Left colon (tissue), 2 donors: ENCODE measurements at regions of chr12 and their contacts with region 1.

Region 1: DNA sequence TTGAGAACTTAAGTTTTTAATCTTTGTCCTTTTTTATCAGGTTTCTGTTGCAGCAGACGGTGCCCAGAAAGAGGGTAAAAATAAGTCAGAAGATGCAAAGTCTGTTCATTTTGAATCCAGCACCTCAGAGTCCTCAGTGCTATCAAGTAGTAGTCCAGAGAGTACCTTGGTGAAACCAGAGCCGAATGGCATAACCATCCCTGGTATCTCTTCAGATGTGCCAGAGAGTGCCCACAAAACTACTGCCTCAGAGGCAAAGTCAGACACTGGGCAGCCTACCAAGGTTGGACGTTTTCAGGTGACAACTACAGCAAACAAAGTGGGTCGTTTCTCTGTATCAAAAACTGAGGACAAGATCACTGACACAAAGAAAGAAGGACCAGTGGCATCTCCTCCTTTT is 53.5 kb downstream of the RAD52 start:
- DNase-seq: no peak
- ATAC-seq: no peak

Region 2: GRCh38 chr12:563250-563781 is 332.7 kb before region 1 on chr12:
- intact Hi-C with region 1: loop called in 1 of 2 experiments (anchors 5 kb)
- DNase-seq: no peak
- ATAC-seq: no peak

Region 3: DNA sequence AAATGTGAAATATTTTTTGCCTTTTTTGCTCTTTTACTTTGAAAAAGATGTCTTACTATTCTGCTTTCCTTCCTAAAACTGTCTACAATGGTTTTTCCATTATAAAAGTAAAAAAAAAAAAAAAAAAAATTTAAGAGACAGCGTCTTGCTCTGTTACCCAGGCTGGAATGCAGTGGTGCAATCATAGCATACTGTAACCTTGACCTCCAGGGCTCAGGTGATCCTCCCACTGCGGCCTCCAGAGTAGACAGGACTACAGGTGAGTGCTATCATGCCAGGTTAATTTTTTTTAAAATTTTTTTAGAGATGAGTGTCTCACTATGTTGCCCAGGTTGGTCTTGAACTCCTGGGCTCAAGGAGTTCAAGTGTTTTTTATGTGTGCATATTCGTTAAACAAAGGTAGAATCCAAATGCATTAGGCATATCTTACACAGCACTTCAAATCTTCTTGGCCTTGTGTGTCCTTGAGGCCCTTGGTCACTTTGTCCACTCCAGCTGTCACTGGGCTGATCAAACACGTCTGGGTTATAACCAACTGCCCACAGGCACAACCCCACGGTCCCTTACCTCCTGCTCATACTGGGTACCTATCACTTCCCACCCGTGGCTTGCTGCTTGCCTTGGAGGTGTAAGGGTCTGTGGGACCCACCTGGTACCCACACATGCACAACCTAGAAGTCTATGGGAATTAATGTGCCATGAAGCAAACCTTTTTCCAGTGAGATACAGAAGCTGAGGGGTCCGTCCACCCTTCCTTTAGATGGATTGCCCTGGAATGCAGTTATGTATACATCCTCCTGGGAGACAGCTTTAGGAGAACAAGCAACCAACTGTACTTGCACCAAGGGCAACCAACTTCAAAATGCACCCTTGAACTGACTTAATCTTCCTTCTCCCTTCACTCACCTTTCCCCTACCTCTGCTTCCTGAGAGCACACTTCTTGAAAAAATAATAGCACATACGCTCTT is 40.6 kb after region 1 on chr12:
- intact Hi-C with region 1: no loop called
- DNase-seq: no peak
- ATAC-seq: no peak